ENCODE measurements at regions of chr14 and their contacts with region 1.

Region 1: DNA sequence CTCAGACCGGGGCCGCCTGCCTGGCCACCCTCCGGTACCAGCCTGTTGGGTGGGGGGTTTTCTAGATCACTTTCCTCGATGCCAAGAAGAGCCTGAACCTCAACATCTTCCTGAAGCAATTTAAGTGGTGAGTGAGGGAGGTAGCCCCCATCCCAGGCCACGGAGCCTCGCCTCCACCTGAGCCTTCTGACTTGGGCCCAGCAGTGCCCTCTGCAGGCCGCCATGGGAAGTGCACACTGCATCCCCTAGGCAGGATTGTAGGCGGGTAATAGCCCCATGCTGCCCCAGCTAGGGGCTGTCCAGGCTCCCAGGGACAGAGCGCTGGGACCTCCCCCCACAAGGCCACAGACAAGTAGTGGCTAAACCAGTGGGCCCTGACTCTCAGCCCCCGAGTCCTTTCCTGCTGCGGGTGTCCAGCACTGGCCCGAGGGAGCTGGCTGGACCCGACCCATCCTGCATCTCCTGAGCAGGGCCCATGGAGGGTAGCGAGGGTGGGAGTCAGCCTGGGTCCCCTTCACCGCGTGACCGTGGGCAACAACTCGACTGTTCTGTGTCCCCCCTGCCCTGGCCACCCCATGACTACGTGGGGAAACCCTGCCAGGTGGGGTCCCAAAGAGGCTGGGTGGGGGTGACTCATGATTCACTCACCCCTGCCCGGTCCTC is 15.3 kb upstream of the ADSS1 start:
- DNase-seq: peak; percentile 57 to 86 (median 70)
- H3K4me3 ChIP-seq: no peak overlapping the region
- H3K27ac ChIP-seq: no peak overlapping the region
- H3K4me1 ChIP-seq: no peaks in the 10 kb centered on the region
- H3K27me3 ChIP-seq: no peaks in the 10 kb centered on the region
- CTCF ChIP-seq: peak; percentile 94 to 97 (median 96)
- POLR2A ChIP-seq: no peak

Region 2: GRCh38 chr14:104650057-104650981 is 58.4 kb before region 1 on chr14:
- intact Hi-C with region 1: loop called (anchors 2 to 5 kb)
- DNase-seq: peak; percentile 42 to 76 (median 63)
- H3K4me3 ChIP-seq: peak overlapping the region in 2 of 4 donors; percentile 6 to 41
- H3K27ac ChIP-seq: no peak overlapping the region
- H3K4me1 ChIP-seq: peaks cover 0 to 13% of the 10 kb centered on the region in 2 donors
- H3K27me3 ChIP-seq: no peaks in the 10 kb centered on the region
- CTCF ChIP-seq: peak; percentile 82 to 99 (median 93)
- POLR2A ChIP-seq: peak in 1 of 2 donors; percentile 23

Region 3: GRCh38 chr14:104826189-104826860 is 117.6 kb after region 1 on chr14:
- intact Hi-C with region 1: no loop called
- DNase-seq: peak; percentile 84 to 94 (median 90)
- H3K4me3 ChIP-seq: peak overlapping the region in 2 of 4 donors; percentile 29 to 68
- H3K27ac ChIP-seq: peak overlapping the region in 2 of 5 donors; percentile 54 to 64
- H3K4me1 ChIP-seq: peaks cover 14 to 17% of the 10 kb centered on the region in 2 donors
- H3K27me3 ChIP-seq: no peaks in the 10 kb centered on the region
- CTCF ChIP-seq: peak; percentile 39 to 88 (median 71)
- POLR2A ChIP-seq: no peak